ENCODE measurements at regions of chr16 and their contacts with region 1.

Region 1: GRCh38 chr16:70267516-70267915 is 15.8 kb upstream of the EXOSC6 start:
- DNase-seq: peak; percentile 61
- ATAC-seq: peak; percentile 82
- H3K4me3 Mint-ChIP-seq: no peak overlapping the region
- H3K27ac Mint-ChIP-seq: peak overlapping the region; percentile 63; the same call in 1 of the 2 replicates
- H3K4me1 Mint-ChIP-seq: no peaks in the 10 kb centered on the region
- H3K27me3 Mint-ChIP-seq: no peaks in the 10 kb centered on the region
- CTCF ChIP-seq: peak; percentile 55; the same call in 1 of the 2 replicates

Region 2: GRCh38 chr16:70158261-70158939 is 109.1 kb before region 1 on chr16:
- CTCF ChIA-PET with region 1: no interaction called
- POLR2A ChIA-PET with region 1: no interaction called
- DNase-seq: peak; percentile 16
- ATAC-seq: peak; percentile 47
- H3K4me3 Mint-ChIP-seq: no peak overlapping the region
- H3K27ac Mint-ChIP-seq: no peak overlapping the region
- H3K4me1 Mint-ChIP-seq: no peaks in the 10 kb centered on the region
- H3K27me3 Mint-ChIP-seq: no peaks in the 10 kb centered on the region
- CTCF ChIP-seq: no peak

Region 3: GRCh38 chr16:70251629-70252354 is 15.7 kb before region 1 on chr16 and contains the start of gene EXOSC6:
- CTCF ChIA-PET with region 1: interaction called, 19 read pairs
- POLR2A ChIA-PET with region 1: interaction called, 4 read pairs
- DNase-seq: peak; percentile 92
- ATAC-seq: peak; percentile 87
- H3K4me3 Mint-ChIP-seq: peak within 1 kb of the TSS; percentile 78
- H3K27ac Mint-ChIP-seq: peak within 1 kb of the TSS; percentile 90
- H3K4me1 Mint-ChIP-seq: peaks cover 6% of the 10 kb centered on the region
- H3K27me3 Mint-ChIP-seq: no peaks in the 10 kb centered on the region; the same call in 1 of the 2 replicates
- CTCF ChIP-seq: peak; percentile 84
- total RNA-seq, gene EXOSC6: 26.0 to 27.6 TPM (median 27.3 TPM) in 3 replicates

Region 4: DNA sequence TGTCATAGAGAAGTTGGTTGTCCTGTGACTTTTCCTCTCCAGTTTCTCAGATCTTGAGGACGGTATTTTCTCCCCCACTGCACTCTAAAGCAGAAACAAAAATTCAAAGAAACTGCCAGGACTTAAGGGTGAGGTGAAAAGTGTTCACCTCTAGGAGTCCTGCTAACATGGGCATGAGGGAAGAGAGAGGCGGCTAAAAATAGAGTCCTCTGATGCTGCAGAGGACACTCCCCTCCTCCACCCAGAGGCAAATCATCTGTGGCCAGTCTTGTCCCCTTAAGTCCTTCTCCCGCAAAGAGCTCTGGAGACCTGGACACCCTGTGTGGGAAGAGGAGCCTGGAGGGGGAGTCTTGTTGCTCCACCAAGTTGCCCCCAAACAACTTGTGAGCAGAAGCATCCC is 74.5 kb after region 1 on chr16:
- CTCF ChIA-PET with region 1: no interaction called
- POLR2A ChIA-PET with region 1: no interaction called
- DNase-seq: no peak
- ATAC-seq: peak; percentile 30
- H3K4me3 Mint-ChIP-seq: no peak overlapping the region
- H3K27ac Mint-ChIP-seq: peak overlapping the region; percentile 89
- H3K4me1 Mint-ChIP-seq: peaks cover 20% of the 10 kb centered on the region
- H3K27me3 Mint-ChIP-seq: no peaks in the 10 kb centered on the region
- CTCF ChIP-seq: no peak

Measured in WTC11 (cell line).